T-cell (primary cell): ENCODE measurements at regions of chr1 and their contacts with region 1.

Region 1: GRCh38 chr1:72010094-72010431 is 272.3 kb downstream of the NEGR1 start:
- DNase-seq: no peak
- ATAC-seq: no peak
- H3K4me3 ChIP-seq: no peak overlapping the region
- H3K4me3 Mint-ChIP-seq: no peak overlapping the region
- H3K27ac ChIP-seq: no peak overlapping the region
- H3K27ac Mint-ChIP-seq: no peak overlapping the region
- H3K4me1 ChIP-seq: no peaks in the 10 kb centered on the region
- H3K4me1 Mint-ChIP-seq: no peaks in the 10 kb centered on the region
- H3K27me3 ChIP-seq: no peaks in the 10 kb centered on the region
- H3K27me3 Mint-ChIP-seq: no peaks in the 10 kb centered on the region

Region 2: GRCh38 chr1:71667216-71667615 is 342.8 kb before region 1 on chr1:
- CTCF ChIA-PET with region 1: no interaction called
- POLR2A ChIA-PET with region 1: no interaction called
- DNase-seq: no peak
- ATAC-seq: no peak
- H3K4me3 ChIP-seq: no peak overlapping the region
- H3K4me3 Mint-ChIP-seq: no peak overlapping the region
- H3K27ac ChIP-seq: no peak overlapping the region
- H3K27ac Mint-ChIP-seq: no peak overlapping the region
- H3K4me1 ChIP-seq: no peaks in the 10 kb centered on the region
- H3K4me1 Mint-ChIP-seq: no peaks in the 10 kb centered on the region
- H3K27me3 ChIP-seq: no peaks in the 10 kb centered on the region
- H3K27me3 Mint-ChIP-seq: no peaks in the 10 kb centered on the region

Region 3: GRCh38 chr1:71908303-71908702 is 101.8 kb before region 1 on chr1:
- CTCF ChIA-PET with region 1: no interaction called
- POLR2A ChIA-PET with region 1: no interaction called
- DNase-seq: no peak
- ATAC-seq: no peak
- H3K4me3 ChIP-seq: no peak overlapping the region
- H3K4me3 Mint-ChIP-seq: no peak overlapping the region
- H3K27ac ChIP-seq: no peak overlapping the region
- H3K27ac Mint-ChIP-seq: no peak overlapping the region
- H3K4me1 ChIP-seq: no peaks in the 10 kb centered on the region
- H3K4me1 Mint-ChIP-seq: no peaks in the 10 kb centered on the region
- H3K27me3 ChIP-seq: no peaks in the 10 kb centered on the region
- H3K27me3 Mint-ChIP-seq: no peaks in the 10 kb centered on the region

Region 4: GRCh38 chr1:72066431-72066830 is 56.4 kb after region 1 on chr1:
- CTCF ChIA-PET with region 1: no interaction called
- POLR2A ChIA-PET with region 1: interaction called in 1 of 2 experiments, 10 read pairs
- DNase-seq: no peak
- ATAC-seq: no peak
- H3K4me3 ChIP-seq: no peak overlapping the region
- H3K4me3 Mint-ChIP-seq: no peak overlapping the region
- H3K27ac ChIP-seq: no peak overlapping the region
- H3K27ac Mint-ChIP-seq: no peak overlapping the region
- H3K4me1 ChIP-seq: no peaks in the 10 kb centered on the region
- H3K4me1 Mint-ChIP-seq: no peaks in the 10 kb centered on the region
- H3K27me3 ChIP-seq: no peaks in the 10 kb centered on the region
- H3K27me3 Mint-ChIP-seq: no peaks in the 10 kb centered on the region